Activated CD4-positive, alpha-beta memory T cell treated with anti-CD3 and anti-CD28 coated beads for 36 hours (primary cell): ENCODE measurements at regions of chr11 and their contacts with region 1.

Region 1: DNA sequence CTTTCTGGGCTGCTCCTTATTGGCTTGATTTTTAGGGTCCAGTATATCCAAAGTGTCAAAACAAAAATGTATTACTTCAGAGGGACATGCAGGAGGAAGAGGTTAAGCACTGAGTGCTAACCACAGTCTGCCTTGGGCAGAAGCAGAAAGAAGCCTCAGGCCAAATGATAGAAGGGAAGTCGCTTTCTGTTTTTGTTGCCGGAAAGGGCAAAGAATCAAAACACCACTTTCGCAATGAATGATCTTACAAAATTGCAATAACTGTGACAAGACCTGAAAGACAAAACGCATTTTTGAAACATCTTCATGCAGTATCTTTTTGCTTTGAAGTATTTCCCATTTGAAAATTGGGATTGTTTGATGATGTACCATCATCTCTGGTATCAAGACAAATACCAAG is 70.1 kb upstream of the PICALM start:
- DNase-seq: peak; percentile 61
- H3K4me3 Mint-ChIP-seq: peak overlapping the region; percentile 20
- H3K27ac Mint-ChIP-seq: peak overlapping the region; percentile 70
- H3K4me1 Mint-ChIP-seq: peaks cover 45% of the 10 kb centered on the region
- H3K27me3 Mint-ChIP-seq: no peaks in the 10 kb centered on the region

Region 2: GRCh38 chr11:85889676-85890579 is 249.0 kb before region 1 on chr11:
- CTCF ChIA-PET with region 1: no interaction called
- POLR2A ChIA-PET with region 1: no interaction called
- intact Hi-C with region 1: no loop called
- DNase-seq: no peak
- H3K4me3 Mint-ChIP-seq: no peak overlapping the region
- H3K27ac Mint-ChIP-seq: no peak overlapping the region
- H3K4me1 Mint-ChIP-seq: no peaks in the 10 kb centered on the region
- H3K27me3 Mint-ChIP-seq: no peaks in the 10 kb centered on the region

Region 3: DNA sequence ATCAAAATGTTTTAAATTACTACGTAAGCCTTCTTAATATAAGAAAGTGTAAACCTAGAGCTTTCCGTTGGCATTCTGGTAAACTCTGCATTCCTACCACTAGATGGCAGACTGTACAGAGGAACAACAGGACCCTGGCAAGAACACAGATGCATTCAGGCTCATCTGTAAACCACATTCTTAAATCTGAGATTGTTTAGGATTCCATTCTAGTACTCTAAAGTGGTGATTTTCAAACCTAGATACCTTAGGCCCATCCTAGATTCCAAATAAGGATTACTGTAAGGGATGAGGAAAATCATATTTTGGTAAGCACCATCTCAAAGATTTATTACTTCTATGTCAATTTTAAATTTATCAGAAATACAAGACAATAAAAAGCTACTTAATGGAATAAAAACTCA is 97.0 kb before region 1 on chr11:
- CTCF ChIA-PET with region 1: no interaction called
- POLR2A ChIA-PET with region 1: no interaction called
- intact Hi-C with region 1: loop called (anchors 1 kb)
- DNase-seq: peak; percentile 48
- H3K4me3 Mint-ChIP-seq: no peak overlapping the region
- H3K27ac Mint-ChIP-seq: peak overlapping the region; percentile 58
- H3K4me1 Mint-ChIP-seq: peaks cover 71% of the 10 kb centered on the region
- H3K27me3 Mint-ChIP-seq: no peaks in the 10 kb centered on the region

Region 4: DNA sequence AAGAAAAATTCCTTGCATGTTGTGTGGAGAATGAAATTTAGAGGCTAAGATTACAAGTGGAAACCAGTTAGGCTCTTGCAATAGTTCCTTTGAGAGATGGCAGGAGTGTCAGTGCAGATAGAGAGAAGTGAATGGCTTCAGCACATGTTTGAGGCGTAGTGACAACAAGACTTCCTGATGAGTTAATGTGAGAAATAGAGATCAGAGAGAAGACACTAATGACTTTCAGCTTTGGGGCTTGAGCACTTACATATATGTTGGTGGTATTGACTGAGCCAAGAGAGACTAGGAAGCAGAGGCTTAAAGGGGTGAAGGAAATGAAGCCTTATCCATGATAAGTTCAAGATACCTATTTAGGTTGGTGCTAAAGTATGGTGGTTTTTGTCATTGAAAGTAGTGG is 14.1 kb before region 1 on chr11:
- CTCF ChIA-PET with region 1: no interaction called
- POLR2A ChIA-PET with region 1: no interaction called
- intact Hi-C with region 1: loop called (anchors 2 kb)
- DNase-seq: no peak
- H3K4me3 Mint-ChIP-seq: no peak overlapping the region
- H3K27ac Mint-ChIP-seq: no peak overlapping the region
- H3K4me1 Mint-ChIP-seq: peaks cover 16% of the 10 kb centered on the region
- H3K27me3 Mint-ChIP-seq: peaks cover 2% of the 10 kb centered on the region

Region 5: GRCh38 chr11:86182976-86183584 is 44.1 kb after region 1 on chr11:
- CTCF ChIA-PET with region 1: no interaction called
- POLR2A ChIA-PET with region 1: no interaction called
- intact Hi-C with region 1: no loop called
- DNase-seq: peak; percentile 84
- H3K4me3 Mint-ChIP-seq: no peak overlapping the region
- H3K27ac Mint-ChIP-seq: no peak overlapping the region
- H3K4me1 Mint-ChIP-seq: peaks cover 9% of the 10 kb centered on the region
- H3K27me3 Mint-ChIP-seq: no peaks in the 10 kb centered on the region